ENCODE measurements at regions of chr19 and their contacts with region 1.

Region 1: GRCh38 chr19:56314562-56315077 is at the start of gene ZSCAN5A:
- DNase-seq: peak; percentile 94 to 95
- ATAC-seq: peak; percentile 94 to 96
- H3K4me3 ChIP-seq: peak within 1 kb of the TSS; percentile 73 to 81 (median 78)
- H3K27ac ChIP-seq: peak within 1 kb of the TSS; percentile 92 to 99 (median 96)
- H3K4me1 ChIP-seq: peaks cover 13 to 15% of the 10 kb centered on the region in 2 donors
- H3K27me3 ChIP-seq: no peaks in the 10 kb centered on the region
- CTCF ChIP-seq: no peak
- POLR2A ChIP-seq: peak; percentile 4 to 21
- total RNA-seq, gene ZSCAN5A: 1.00 to 26.1 (median 3.6) TPM

Region 2: GRCh38 chr19:56121180-56122167 is 193.1 kb before region 1 on chr19 and contains the start of gene ZNF787:
- in situ Hi-C with region 1: no loop called
- intact Hi-C with region 1: loop called (anchors 1 kb)
- DNase-seq: peak; percentile 95 to 99
- ATAC-seq: peak; percentile 77 to 85
- H3K4me3 ChIP-seq: peak within 1 kb of the TSS; percentile 79 to 93 (median 88)
- H3K27ac ChIP-seq: peak within 1 kb of the TSS; percentile 92 to 99 (median 98)
- H3K4me1 ChIP-seq: peaks cover 35 to 54% of the 10 kb centered on the region in 2 donors
- H3K27me3 ChIP-seq: no peaks in the 10 kb centered on the region
- CTCF ChIP-seq: no peak
- POLR2A ChIP-seq: peak; percentile 54 to 60
- total RNA-seq, gene ZNF787: 16.7 to 43.0 (median 26.5) TPM

Region 3: GRCh38 chr19:56140583-56141416 is 173.8 kb before region 1 on chr19 and contains the start of gene ZNF444:
- in situ Hi-C with region 1: loop called in 2 of 4 experiments (anchors 10 kb)
- intact Hi-C with region 1: loop called (anchors 5 kb)
- DNase-seq: peak; percentile 98 to 99
- ATAC-seq: peak; percentile 96
- H3K4me3 ChIP-seq: peak within 1 kb of the TSS; percentile 57 to 76 (median 60)
- H3K27ac ChIP-seq: peak within 1 kb of the TSS; percentile 84 to 89 (median 86)
- H3K4me1 ChIP-seq: peaks cover 11 to 21% of the 10 kb centered on the region in 2 donors
- H3K27me3 ChIP-seq: no peaks in the 10 kb centered on the region
- CTCF ChIP-seq: no peak
- POLR2A ChIP-seq: peak; percentile 52 to 54
- total RNA-seq, gene ZNF444: 16.4 to 38.9 (median 24.9) TPM

Region 4: DNA sequence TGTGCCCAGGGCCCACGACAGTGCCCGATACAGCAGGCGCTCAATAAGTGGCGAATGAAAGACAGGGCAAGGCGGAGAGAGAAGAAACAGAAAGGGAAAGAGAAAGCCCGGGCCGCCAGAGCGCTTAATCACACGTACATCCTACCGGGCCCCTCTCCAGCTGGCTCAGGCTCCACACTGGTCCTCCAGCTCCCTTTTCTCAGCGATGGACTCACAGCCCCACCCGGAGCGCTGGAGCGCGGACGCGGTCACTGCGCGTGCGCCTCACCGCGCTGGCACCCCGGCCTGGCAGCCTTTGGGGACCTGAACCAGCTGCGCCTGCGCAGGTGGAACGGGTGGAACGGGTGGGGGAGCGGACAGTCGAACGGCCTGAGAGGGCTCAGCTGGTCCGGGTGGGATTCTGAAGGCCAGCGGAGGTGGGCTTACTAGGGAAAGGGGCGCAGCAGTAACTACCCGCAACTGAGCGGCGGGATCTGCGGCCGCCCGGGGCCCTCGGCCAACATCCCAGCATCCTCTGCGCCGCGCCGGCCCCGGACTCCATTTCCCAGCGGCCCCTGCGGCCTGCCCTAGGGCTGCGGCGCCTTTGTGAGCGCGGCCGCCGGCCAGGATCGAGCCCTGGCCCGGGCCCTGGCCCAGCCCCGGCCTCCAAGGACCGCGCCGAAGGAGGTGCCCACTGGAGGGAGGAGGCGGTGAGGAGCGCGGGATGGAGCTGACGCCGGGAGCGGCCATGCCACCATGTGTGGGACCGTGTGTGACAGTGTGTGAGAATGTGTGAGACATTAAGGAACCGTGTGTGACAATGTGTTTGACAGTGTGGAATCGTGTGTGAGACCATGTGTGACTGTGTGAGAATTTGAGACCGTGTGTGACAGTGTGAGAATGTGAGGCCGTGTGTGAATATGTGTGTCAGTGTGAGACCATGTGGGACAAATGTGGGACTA is 89.4 kb after region 1 on chr19 and contains the start of gene ZNF583:
- in situ Hi-C with region 1: no loop called
- intact Hi-C with region 1: loop called (anchors 2 kb)
- DNase-seq: peak; percentile 89 to 97
- ATAC-seq: peak; percentile 96 to 99
- H3K4me3 ChIP-seq: peak within 1 kb of the TSS; percentile 66 to 95 (median 84)
- H3K27ac ChIP-seq: peak within 1 kb of the TSS; percentile 90 to 93 (median 92)
- H3K4me1 ChIP-seq: peaks cover 12 to 14% of the 10 kb centered on the region in 2 donors
- H3K27me3 ChIP-seq: no peaks in the 10 kb centered on the region
- CTCF ChIP-seq: no peak
- POLR2A ChIP-seq: no peak
- total RNA-seq, gene ZNF583: 3.5 to 9.2 (median 4.3) TPM

Region 5: DNA sequence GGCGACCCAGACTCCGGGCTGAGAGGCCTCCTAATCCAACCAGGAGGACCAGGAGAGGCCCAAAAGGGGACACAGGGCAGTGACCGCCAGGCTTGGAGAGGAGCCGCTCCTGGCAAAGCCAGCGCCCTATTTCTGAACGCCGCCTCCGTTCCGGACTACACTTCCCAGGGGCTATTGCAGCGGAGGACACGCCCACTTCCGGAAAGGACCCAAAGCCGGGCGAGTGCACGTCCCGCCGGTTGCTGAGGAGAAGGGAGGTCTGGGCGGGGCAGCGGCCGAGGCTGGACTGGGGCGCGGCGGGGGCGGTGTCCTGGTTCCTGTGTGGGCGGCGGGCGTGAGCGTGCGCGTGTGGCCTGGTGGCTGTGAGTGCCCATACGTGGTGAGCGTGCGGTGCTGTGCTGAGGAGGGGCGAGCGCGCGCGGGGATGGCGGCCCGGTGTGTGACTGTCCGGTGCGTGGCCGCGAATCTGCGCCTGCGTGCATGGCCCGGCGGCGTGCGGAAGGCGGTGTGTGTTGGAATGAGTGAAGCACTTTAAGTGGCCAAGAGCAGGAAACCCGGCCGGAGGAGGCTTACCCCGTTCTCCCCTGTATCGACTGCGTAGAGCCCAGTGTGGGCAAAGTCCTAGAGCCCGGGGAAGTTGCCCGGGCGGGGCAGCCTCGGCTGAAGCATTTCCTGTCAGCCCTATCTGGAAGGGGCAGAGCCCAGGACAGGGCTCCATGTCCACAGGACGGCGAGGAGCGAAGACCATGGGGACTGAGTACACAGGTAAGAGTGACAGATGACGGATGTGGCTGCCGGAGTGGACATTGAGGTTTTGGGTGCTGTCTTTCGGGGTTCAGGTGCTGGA is 252.9 kb after region 1 on chr19 and contains the start of gene ZNF470:
- in situ Hi-C with region 1: no loop called
- intact Hi-C with region 1: loop called (anchors 2 kb)
- DNase-seq: peak; percentile 90 to 92
- ATAC-seq: peak; percentile 99
- H3K4me3 ChIP-seq: peak within 1 kb of the TSS; percentile 80 to 98 (median 85)
- H3K27ac ChIP-seq: peak within 1 kb of the TSS; percentile 83 to 91 (median 86)
- H3K4me1 ChIP-seq: peaks cover 13 to 14% of the 10 kb centered on the region in 2 donors
- H3K27me3 ChIP-seq: no peaks in the 10 kb centered on the region
- CTCF ChIP-seq: peak in 1 of 5 experiments; percentile 5
- POLR2A ChIP-seq: peak; percentile 46 to 50
- total RNA-seq, gene ZNF470: 0.32 to 2.0 (median 0.83) TPM

Region 6: DNA sequence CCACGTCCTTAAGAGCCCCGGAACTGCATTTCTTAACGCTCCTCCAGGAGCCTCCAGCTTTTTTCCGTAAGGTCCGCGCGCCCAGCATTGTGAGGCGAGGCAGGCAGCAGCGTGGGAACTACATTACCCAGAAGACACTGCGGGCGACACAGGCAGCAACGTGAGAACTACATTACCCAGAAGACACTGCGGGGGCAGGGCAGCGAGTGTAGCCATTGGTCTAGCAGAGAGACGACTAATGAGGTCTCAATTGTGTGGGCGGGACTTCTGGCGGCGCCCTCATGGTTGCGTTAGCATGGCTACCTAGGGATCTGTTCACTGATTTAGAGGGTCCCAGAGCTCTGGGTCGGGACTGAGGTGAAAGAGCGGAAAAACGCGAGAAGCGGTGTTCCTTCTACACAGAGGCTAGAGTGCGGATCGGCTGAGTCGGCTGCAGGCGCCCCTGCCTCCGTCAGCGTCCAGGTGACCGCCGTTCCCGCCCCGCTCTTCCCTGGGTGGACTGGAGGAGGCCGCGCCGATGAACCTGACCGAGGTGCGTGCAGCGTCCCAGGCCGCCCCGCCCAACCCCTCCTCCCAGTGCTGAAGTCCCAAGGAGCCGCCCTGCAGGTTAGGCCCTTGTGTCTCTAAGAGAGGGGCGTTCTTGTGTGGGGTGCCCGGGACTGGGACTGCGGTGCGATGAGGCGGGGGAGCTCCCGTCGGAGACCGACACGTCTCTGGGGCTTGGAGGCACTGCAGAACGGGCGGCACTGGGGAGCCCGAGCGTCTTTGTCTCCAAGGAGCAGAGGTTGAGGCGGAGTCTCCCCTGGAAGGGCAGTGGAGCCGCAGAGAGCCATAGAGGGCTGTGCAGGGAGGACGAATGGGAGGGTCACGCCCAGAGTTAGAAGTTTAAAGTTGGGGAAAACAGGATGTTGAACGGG is 1120.7 kb after region 1 on chr19 and contains the start of gene ZNF749:
- in situ Hi-C with region 1: no loop called
- intact Hi-C with region 1: loop called (anchors 10 kb)
- DNase-seq: peak; percentile 97 to 99
- ATAC-seq: peak; percentile 100
- H3K4me3 ChIP-seq: peak within 1 kb of the TSS; percentile 87 to 94 (median 90)
- H3K27ac ChIP-seq: peak within 1 kb of the TSS; percentile 70 to 79 (median 75)
- H3K4me1 ChIP-seq: peaks cover 14 to 17% of the 10 kb centered on the region in 2 donors
- H3K27me3 ChIP-seq: no peaks in the 10 kb centered on the region
- CTCF ChIP-seq: no peak
- POLR2A ChIP-seq: no peak
- total RNA-seq, gene ZNF749: 3.1 to 11.4 (median 3.9) TPM

Measured in gastrocnemius medialis (tissue), 4 donors.